Natural killer cell (primary cell): ENCODE measurements at regions of chrX and their contacts with region 1.

Region 1: DNA sequence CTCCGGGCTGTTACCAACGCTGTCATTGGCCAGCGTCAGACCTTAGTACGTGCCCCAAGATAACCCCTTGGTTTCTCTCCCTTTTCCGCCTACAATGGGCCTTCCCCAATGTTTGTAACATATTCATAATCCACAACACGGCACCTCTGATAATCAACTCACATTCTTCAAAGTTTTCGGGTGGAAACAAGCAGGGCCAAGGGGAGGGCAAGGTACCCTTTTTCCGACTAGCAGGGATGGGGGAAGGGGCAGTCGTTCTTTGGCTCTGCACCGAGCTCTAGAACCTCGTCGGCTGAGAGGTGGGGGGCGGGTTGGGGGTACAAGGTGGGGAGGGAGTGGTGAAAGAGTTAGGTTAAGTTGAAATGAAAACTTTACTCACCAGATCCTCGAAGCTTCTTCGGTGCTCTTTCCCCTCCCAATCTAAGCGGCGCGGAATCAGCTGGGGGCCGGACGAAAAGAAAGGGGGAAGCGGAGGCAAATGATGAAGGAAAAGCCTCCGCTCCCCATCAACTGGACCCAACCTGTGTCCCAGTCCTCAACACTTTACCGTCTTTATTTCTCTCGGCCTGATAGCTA is 1.4 kb downstream of the BRWD3 start:
- DNase-seq: peak; percentile 72 to 89
- ATAC-seq: peak; percentile 64 to 77 (median 71)
- H3K4me3 ChIP-seq: peak overlapping the region; percentile 81
- H3K4me3 Mint-ChIP-seq: peak overlapping the region; percentile 93
- H3K27ac ChIP-seq: peak overlapping the region; percentile 91
- H3K27ac Mint-ChIP-seq: peak overlapping the region; percentile 96 to 97
- H3K4me1 ChIP-seq: peaks cover 5% of the 10 kb centered on the region
- H3K4me1 Mint-ChIP-seq: peaks cover 14 to 23% of the 10 kb centered on the region in 2 donors
- H3K27me3 ChIP-seq: no peaks in the 10 kb centered on the region
- H3K27me3 Mint-ChIP-seq: peaks cover 0 to 4% of the 10 kb centered on the region in 2 donors
- CTCF ChIP-seq: no peak

Region 2: GRCh38 chrX:80917919-80918318 is 109.7 kb after region 1 on chrX:
- intact Hi-C with region 1: no loop called
- DNase-seq: no peak
- ATAC-seq: no peak
- H3K4me3 ChIP-seq: no peak overlapping the region
- H3K4me3 Mint-ChIP-seq: no peak overlapping the region
- H3K27ac ChIP-seq: no peak overlapping the region
- H3K27ac Mint-ChIP-seq: no peak overlapping the region
- H3K4me1 ChIP-seq: no peaks in the 10 kb centered on the region
- H3K4me1 Mint-ChIP-seq: no peaks in the 10 kb centered on the region
- H3K27me3 ChIP-seq: no peaks in the 10 kb centered on the region
- H3K27me3 Mint-ChIP-seq: no peaks in the 10 kb centered on the region
- CTCF ChIP-seq: no peak

Region 3: DNA sequence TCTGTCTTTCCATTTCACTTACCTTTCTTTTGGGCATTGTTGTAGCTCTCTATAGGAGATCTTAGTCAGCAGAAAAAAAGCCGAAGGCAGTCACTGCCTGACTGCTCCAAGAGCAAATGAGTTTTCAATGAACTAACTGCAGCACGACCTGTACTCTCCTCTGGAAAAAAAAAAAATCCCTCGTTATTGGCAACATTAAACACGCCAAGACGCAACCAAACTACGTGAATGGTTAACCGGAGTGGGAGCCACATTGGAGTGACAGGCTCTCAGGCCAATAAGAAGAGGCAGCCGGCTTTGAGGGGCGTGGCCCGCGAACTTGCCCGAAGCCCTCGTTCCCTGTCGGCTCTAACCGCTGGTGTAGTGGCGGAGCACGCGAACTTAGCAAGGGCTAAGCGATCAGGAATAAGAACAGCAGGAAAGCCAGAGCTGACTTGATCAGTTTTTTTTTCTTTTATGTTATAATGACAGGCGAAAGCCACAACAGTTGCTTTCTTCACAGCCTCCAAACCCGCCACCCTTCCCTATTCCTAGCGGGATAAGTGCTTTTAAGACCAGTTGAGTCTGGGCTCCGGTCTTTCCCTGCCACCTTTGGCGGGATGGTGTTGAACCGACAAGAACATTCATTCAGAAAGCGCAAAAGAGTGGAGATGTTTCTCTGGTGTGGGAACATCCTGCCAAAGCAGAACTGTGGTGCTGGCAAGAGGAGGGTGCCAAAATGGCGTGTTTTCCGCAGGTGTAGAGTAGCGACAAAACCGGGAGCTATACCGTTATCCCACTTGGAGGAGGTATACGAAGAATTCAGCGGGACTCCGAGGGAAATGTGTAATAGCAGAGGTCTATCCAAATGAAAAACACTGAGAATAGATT is 313.5 kb after region 1 on chrX:
- intact Hi-C with region 1: loop called (anchors 1 kb)
- DNase-seq: peak; percentile 78 to 90
- ATAC-seq: peak; percentile 91 to 96 (median 94)
- H3K4me3 ChIP-seq: peak overlapping the region; percentile 82
- H3K4me3 Mint-ChIP-seq: peak overlapping the region; percentile 93
- H3K27ac ChIP-seq: no peak overlapping the region
- H3K27ac Mint-ChIP-seq: peak overlapping the region; percentile 44 to 82
- H3K4me1 ChIP-seq: peaks cover 9% of the 10 kb centered on the region
- H3K4me1 Mint-ChIP-seq: peaks cover 22 to 25% of the 10 kb centered on the region in 2 donors
- H3K27me3 ChIP-seq: peaks cover 3% of the 10 kb centered on the region
- H3K27me3 Mint-ChIP-seq: peaks cover 3 to 32% of the 10 kb centered on the region in 2 donors
- CTCF ChIP-seq: no peak

Region 4: GRCh38 chrX:81201671-81202455 is 393.6 kb after region 1 on chrX and contains the starts of genes HMGN5 and SH3BGRL:
- intact Hi-C with region 1: loop called (anchors 2 kb)
- DNase-seq: peak; percentile 53 to 83
- ATAC-seq: peak; percentile 96 to 98 (median 96)
- H3K4me3 ChIP-seq: peak within 1 kb of the TSS; percentile 95
- H3K4me3 Mint-ChIP-seq: peak within 1 kb of the TSS; percentile 91
- H3K27ac ChIP-seq: peak within 1 kb of the TSS; percentile 78
- H3K27ac Mint-ChIP-seq: peak within 1 kb of the TSS; percentile 92 to 93
- H3K4me1 ChIP-seq: peaks cover 2% of the 10 kb centered on the region
- H3K4me1 Mint-ChIP-seq: peaks cover 39 to 46% of the 10 kb centered on the region in 2 donors
- H3K27me3 ChIP-seq: no peaks in the 10 kb centered on the region
- H3K27me3 Mint-ChIP-seq: no peaks in the 10 kb centered on the region
- CTCF ChIP-seq: no peak
- total RNA-seq, gene HMGN5: 0.95 to 1.3 (median 1.3) TPM
- total RNA-seq, gene SH3BGRL: 103 to 108 (median 108) TPM